ENCODE measurements at regions of chr2 and their contacts with region 1.

Region 1: GRCh38 chr2:46451131-46451711 is 28.1 kb upstream of the TMEM247 start:
- DNase-seq: no peak
- ATAC-seq: peak in 7 of 8 donors; percentile 25 to 89 (median 68)
- H3K4me3 ChIP-seq: no peak overlapping the region
- H3K27ac ChIP-seq: peak overlapping the region in 1 of 10 donors; percentile 17
- H3K4me1 ChIP-seq: peaks cover 0 to 13% (median 0%) of the 10 kb centered on the region in 9 donors
- H3K27me3 ChIP-seq: no peaks in the 10 kb centered on the region
- CTCF ChIP-seq: no peak

Region 2: GRCh38 chr2:46230115-46230571 is 221.1 kb before region 1 on chr2:
- intact Hi-C with region 1: loop called in 2 of 10 experiments (anchors 10 kb)
- DNase-seq: peak; percentile 23 to 51
- ATAC-seq: peak; percentile 74 to 91 (median 85)
- H3K4me3 ChIP-seq: no peak overlapping the region
- H3K27ac ChIP-seq: peak overlapping the region in 8 of 10 donors; percentile 4 to 61 (median 42)
- H3K4me1 ChIP-seq: peaks cover 3 to 35% (median 21%) of the 10 kb centered on the region in 9 donors
- H3K27me3 ChIP-seq: no peaks in the 10 kb centered on the region
- CTCF ChIP-seq: peak in 8 of 9 donors; percentile 10 to 57 (median 46)

Region 3: GRCh38 chr2:46385786-46386577 is 65.2 kb before region 1 on chr2:
- intact Hi-C with region 1: loop called in 5 of 10 experiments (anchors 5 to 10 kb)
- DNase-seq: no peak
- ATAC-seq: peak in 1 of 8 donors; percentile 9
- H3K4me3 ChIP-seq: no peak overlapping the region
- H3K27ac ChIP-seq: peak overlapping the region in 5 of 10 donors; percentile 1 to 68 (median 33)
- H3K4me1 ChIP-seq: peaks cover 0 to 40% (median 15%) of the 10 kb centered on the region in 9 donors
- H3K27me3 ChIP-seq: no peaks in the 10 kb centered on the region
- CTCF ChIP-seq: no peak

Region 4: GRCh38 chr2:46409753-46410152 is 41.5 kb before region 1 on chr2:
- intact Hi-C with region 1: loop called in 1 of 10 experiments (anchors 5 kb)
- DNase-seq: no peak
- ATAC-seq: peak in 2 of 8 donors; percentile 4 to 7
- H3K4me3 ChIP-seq: no peak overlapping the region
- H3K27ac ChIP-seq: peak overlapping the region in 6 of 10 donors; percentile 9 to 61 (median 41)
- H3K4me1 ChIP-seq: peaks cover 0 to 18% (median 4%) of the 10 kb centered on the region in 9 donors
- H3K27me3 ChIP-seq: no peaks in the 10 kb centered on the region
- CTCF ChIP-seq: no peak